Caco-2 (cell line): ENCODE measurements at regions of chr18 and their contacts with region 1.

Region 1: DNA sequence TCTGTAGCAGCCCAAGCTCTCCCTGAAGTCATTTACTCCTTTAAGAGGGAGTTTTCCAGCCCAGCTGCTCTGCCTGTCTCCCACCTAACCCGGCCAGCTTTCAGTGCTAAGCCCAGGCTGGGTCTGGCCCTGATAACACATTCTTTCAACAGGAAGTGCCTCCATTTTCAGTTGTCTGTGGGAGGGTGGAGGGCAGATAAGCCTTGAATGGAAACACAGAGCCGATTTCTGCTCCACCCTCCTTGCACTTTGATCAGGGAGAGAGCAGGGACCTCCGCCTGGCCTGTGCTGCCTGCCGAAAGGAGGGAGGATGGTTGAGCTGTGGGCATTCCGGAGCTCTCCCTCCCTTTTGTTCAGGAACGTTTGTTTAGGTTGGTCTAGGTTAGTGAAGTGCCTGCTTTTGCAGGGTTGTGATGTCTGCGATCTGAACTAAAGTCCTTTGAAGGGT is 24.8 kb downstream of the GATA6 start:
- DNase-seq: peak; percentile 90 to 91
- H3K4me3 ChIP-seq: no peak overlapping the region
- H3K4me3 Mint-ChIP-seq: peak overlapping the region; percentile 62
- H3K27ac Mint-ChIP-seq: peak overlapping the region; percentile 86
- H3K4me1 ChIP-seq: peaks cover 70% of the 10 kb centered on the region
- H3K4me1 Mint-ChIP-seq: peaks cover 67% of the 10 kb centered on the region
- H3K27me3 ChIP-seq: no peaks in the 10 kb centered on the region
- H3K27me3 Mint-ChIP-seq: no peaks in the 10 kb centered on the region
- CTCF ChIP-seq: no peak

Region 2: DNA sequence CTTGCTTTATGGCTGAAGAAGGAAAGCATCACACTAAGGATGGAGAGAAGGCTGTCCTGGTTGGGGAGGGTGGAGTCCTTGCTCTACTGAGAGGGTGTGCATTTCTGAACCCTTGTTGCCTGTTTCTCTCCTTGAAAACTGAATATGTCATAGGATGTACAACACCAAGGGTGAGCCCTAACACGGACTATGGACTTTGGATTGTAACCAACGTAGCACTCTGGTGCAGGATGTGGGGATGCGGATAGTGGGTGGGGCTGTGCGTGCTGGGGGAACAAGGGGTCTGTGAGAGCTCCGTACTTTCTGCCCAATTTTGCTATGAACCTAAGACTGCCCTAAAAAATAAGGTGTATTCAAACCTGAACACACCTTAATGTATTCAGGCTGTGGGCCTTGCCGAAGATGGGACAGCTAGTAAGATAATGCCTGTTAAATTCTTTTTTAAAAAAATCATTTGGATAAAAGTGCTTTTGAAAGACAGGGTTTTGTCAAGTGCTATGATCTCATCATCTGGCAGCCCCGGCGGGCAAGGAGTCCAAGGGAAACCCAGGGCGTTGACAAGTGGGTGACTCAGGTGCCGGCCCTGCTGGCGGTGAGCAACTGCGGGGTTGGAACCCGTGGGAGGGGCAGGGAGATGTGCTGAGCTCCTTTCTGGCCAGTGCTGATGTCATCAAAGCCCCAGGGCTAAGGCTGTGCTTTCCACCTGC is 29.2 kb after region 1 on chr18:
- CTCF ChIA-PET with region 1: no interaction called
- POLR2A ChIA-PET with region 1: no interaction called
- intact Hi-C with region 1: no loop called
- DNase-seq: peak; percentile 65 to 78
- H3K4me3 ChIP-seq: no peak overlapping the region
- H3K4me3 Mint-ChIP-seq: no peak overlapping the region
- H3K27ac Mint-ChIP-seq: peak overlapping the region; percentile 54
- H3K4me1 ChIP-seq: peaks cover 32% of the 10 kb centered on the region
- H3K4me1 Mint-ChIP-seq: peaks cover 28% of the 10 kb centered on the region
- H3K27me3 ChIP-seq: no peaks in the 10 kb centered on the region
- H3K27me3 Mint-ChIP-seq: no peaks in the 10 kb centered on the region
- CTCF ChIP-seq: no peak

Region 3: DNA sequence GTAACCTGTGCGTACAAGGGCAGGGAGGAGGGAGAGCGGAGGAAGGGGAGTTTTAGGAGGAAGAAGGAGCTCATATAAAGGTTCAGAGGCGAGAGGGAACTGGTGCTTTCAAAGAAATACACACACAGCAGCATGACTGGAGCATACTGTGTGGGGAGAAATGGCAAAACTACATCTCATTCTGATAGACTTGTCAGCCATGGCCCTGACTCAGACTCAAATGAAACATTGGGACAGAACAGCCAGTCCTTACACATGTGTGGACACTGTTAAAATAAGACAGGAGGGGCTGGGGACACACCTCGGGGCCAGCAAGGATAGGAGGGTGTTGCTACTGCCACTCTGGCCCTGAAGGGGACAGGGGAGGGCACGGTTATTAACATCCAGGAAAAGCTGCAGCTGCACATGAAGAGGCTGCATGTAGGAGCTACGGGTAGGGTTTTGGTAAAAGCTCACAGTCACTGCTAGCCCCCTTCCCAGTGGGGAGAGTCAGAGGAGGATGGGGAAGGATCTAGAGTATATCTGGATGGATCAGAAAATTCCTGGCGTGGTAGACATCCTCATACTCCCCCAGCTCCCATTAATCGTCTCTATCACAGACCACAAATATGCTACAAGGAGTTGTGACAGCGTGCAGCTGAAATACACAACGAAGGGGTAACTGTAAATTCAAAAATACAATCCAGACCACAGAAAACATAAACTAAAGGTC is 85.7 kb after region 1 on chr18:
- CTCF ChIA-PET with region 1: no interaction called
- POLR2A ChIA-PET with region 1: no interaction called
- intact Hi-C with region 1: no loop called
- DNase-seq: no peak
- H3K4me3 ChIP-seq: no peak overlapping the region
- H3K4me3 Mint-ChIP-seq: no peak overlapping the region
- H3K27ac Mint-ChIP-seq: no peak overlapping the region
- H3K4me1 ChIP-seq: peaks cover 16% of the 10 kb centered on the region
- H3K4me1 Mint-ChIP-seq: peaks cover 13% of the 10 kb centered on the region
- H3K27me3 ChIP-seq: no peaks in the 10 kb centered on the region
- H3K27me3 Mint-ChIP-seq: no peaks in the 10 kb centered on the region
- CTCF ChIP-seq: no peak

Region 4: DNA sequence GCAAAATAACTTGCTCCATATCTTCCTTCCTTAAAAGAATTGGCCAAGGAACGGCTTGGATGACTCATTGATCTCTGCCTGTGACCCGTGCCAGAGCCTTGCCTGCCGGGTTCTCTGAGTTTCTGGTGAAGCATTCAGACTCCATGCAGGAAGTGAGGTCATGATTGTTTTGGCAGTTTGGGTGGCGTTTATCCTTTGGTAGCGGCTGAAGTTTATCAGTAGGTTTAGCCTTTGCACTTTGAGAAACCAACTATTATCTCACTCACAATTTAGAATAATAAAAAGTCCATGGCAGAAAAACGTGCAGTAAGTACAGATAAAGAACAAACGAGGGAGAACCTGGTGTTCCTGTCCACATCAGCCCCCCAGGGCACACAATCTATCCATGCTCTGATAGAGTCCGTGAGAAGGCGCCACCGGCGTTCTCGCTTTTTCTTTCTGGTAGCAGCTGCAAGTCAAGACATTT is 238.5 kb after region 1 on chr18:
- CTCF ChIA-PET with region 1: no interaction called
- POLR2A ChIA-PET with region 1: no interaction called
- intact Hi-C with region 1: no loop called
- DNase-seq: no peak
- H3K4me3 ChIP-seq: no peak overlapping the region
- H3K4me3 Mint-ChIP-seq: no peak overlapping the region
- H3K27ac Mint-ChIP-seq: no peak overlapping the region
- H3K4me1 ChIP-seq: peaks cover 11% of the 10 kb centered on the region
- H3K4me1 Mint-ChIP-seq: peaks cover 6% of the 10 kb centered on the region
- H3K27me3 ChIP-seq: no peaks in the 10 kb centered on the region
- H3K27me3 Mint-ChIP-seq: no peaks in the 10 kb centered on the region
- CTCF ChIP-seq: no peak

Region 5: DNA sequence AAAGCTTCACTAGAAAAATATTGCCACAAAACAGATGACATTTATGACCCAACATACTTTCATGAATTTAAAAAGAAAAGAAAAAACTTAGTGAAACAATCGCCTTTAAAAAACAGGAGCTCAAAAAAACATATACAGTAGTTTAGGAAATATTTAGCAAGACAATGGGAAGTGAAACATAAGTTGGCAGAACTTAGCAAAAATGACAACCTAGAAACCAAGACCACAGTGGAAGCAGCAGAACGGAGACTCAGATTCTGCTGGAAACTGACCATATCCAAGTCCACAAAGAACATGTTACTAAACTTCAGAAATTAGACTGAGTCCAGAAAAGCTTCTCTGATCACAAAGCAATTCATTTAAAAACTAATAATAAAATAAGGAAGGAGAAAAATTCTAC is 265.3 kb after region 1 on chr18:
- CTCF ChIA-PET with region 1: interaction called, 12 read pairs
- POLR2A ChIA-PET with region 1: no interaction called
- intact Hi-C with region 1: no loop called
- DNase-seq: no peak
- H3K4me3 ChIP-seq: no peak overlapping the region
- H3K4me3 Mint-ChIP-seq: no peak overlapping the region
- H3K27ac Mint-ChIP-seq: no peak overlapping the region
- H3K4me1 ChIP-seq: peaks cover 16% of the 10 kb centered on the region
- H3K4me1 Mint-ChIP-seq: peaks cover 15% of the 10 kb centered on the region
- H3K27me3 ChIP-seq: no peaks in the 10 kb centered on the region
- H3K27me3 Mint-ChIP-seq: no peaks in the 10 kb centered on the region
- CTCF ChIP-seq: no peak